ENCODE measurements at regions of chr1 and their contacts with region 1.

Region 1: DNA sequence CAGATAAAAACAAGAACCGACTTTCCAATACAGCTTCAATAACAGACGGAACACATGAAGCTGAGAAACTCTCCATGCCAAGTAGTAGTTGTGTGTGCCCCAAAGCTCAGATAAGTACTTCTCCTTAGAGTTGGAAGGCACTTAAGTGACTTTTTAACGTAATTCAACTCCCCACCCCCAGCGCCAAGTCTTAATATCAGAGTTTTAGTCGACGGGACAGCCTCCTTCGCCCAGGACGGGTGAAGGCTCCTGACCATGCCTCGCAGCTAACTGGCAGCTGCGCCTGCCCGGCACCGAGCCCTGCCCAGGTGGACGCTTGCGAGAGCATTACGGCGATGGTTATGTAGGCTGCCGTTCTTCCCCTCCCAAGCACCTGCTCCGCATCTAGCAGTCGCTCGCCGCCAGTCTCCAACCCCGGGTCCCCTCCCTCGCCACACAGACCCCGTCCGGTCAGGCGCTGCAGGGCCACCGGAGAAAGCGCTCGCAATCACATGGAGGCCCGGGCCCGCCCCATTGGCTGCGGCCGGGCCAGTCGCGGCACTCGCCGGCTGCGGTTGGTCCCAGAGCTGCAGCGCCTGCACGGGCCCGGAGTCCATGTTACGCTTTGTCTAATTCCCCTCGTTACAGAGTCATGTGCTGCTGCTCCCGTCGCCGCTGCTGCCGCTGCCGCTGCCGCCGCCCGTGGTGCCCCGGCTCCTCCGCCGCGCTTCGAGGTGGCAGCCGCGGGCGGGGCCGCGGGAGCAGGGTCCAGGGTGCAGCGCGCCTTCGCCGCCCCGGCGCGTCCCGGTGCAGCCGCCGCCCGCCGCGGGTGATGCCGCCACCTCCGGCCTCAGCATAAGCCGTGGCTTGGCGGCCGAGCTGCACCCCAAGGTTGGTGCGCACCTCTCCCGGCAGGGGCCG is at the start of gene LRRC8D:
- DNase-seq: peak; percentile 67
- ATAC-seq: peak; percentile 66
- H3K4me3 Mint-ChIP-seq: peak within 1 kb of the TSS; percentile 95
- H3K27ac Mint-ChIP-seq: peak within 1 kb of the TSS; percentile 96
- H3K4me1 Mint-ChIP-seq: peaks cover 48% of the 10 kb centered on the region
- H3K27me3 Mint-ChIP-seq: no peaks in the 10 kb centered on the region
- CTCF ChIP-seq: no peak
- total RNA-seq, gene LRRC8D: 31.3 and 36.0 TPM in 2 replicates

Region 2: GRCh38 chr1:89454845-89455521 is 365.7 kb before region 1 on chr1:
- CTCF ChIA-PET with region 1: no interaction called
- POLR2A ChIA-PET with region 1: no interaction called
- intact Hi-C with region 1: no loop called
- DNase-seq: no peak
- ATAC-seq: peak; percentile 79
- H3K4me3 Mint-ChIP-seq: no peak overlapping the region
- H3K27ac Mint-ChIP-seq: no peak overlapping the region
- H3K4me1 Mint-ChIP-seq: no peaks in the 10 kb centered on the region
- H3K27me3 Mint-ChIP-seq: peaks cover 2% of the 10 kb centered on the region
- CTCF ChIP-seq: peak; percentile 41

Region 3: DNA sequence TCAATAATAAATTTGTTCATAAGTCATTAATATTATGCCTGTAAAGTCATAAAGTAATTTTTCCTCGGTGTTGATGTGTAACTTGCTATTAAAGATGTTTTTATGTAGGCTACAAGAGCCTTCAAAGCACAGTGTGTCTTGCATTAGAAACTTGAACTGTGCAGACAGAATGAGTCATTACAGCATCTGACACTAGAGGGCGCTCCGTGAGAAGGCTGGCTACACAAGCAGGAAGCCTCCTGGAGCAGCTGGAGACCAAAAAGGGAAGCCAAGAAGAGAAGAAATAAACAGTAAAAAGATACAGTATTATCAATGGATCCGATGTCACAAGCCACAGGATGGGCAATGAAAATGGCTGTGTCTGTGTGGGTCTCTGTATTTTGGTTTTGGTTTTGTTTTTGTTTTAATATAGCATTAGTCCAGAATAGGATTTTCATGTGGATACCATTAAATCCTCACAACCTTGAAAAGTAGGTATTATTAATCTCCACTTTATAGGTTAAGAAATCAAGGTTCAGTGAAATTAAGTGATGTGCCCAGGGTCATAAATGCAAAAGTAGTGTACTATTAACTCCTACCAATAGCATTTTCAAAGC is 15.9 kb before region 1 on chr1:
- CTCF ChIA-PET with region 1: interaction called, 9 read pairs
- POLR2A ChIA-PET with region 1: interaction called, 4 read pairs
- intact Hi-C with region 1: loop called (anchors 1 kb)
- DNase-seq: peak; percentile 59
- ATAC-seq: peak; percentile 94
- H3K4me3 Mint-ChIP-seq: no peak overlapping the region
- H3K27ac Mint-ChIP-seq: no peak overlapping the region
- H3K4me1 Mint-ChIP-seq: no peaks in the 10 kb centered on the region
- H3K27me3 Mint-ChIP-seq: no peaks in the 10 kb centered on the region
- CTCF ChIP-seq: peak; percentile 92

Region 4: GRCh38 chr1:89843281-89844121 is 22.8 kb after region 1 on chr1:
- CTCF ChIA-PET with region 1: interaction called, 14 read pairs
- POLR2A ChIA-PET with region 1: interaction called, 81 read pairs
- intact Hi-C with region 1: loop called (anchors 1 kb)
- DNase-seq: peak; percentile 76
- ATAC-seq: peak; percentile 91
- H3K4me3 Mint-ChIP-seq: peak overlapping the region; percentile 94
- H3K27ac Mint-ChIP-seq: peak overlapping the region; percentile 90
- H3K4me1 Mint-ChIP-seq: peaks cover 53% of the 10 kb centered on the region
- H3K27me3 Mint-ChIP-seq: no peaks in the 10 kb centered on the region
- CTCF ChIP-seq: peak; percentile 45

Region 5: GRCh38 chr1:89866568-89866967 is 45.9 kb after region 1 on chr1:
- CTCF ChIA-PET with region 1: no interaction called
- POLR2A ChIA-PET with region 1: no interaction called
- intact Hi-C with region 1: no loop called
- DNase-seq: no peak
- ATAC-seq: no peak
- H3K4me3 Mint-ChIP-seq: no peak overlapping the region
- H3K27ac Mint-ChIP-seq: no peak overlapping the region
- H3K4me1 Mint-ChIP-seq: peaks cover 35% of the 10 kb centered on the region
- H3K27me3 Mint-ChIP-seq: no peaks in the 10 kb centered on the region
- CTCF ChIP-seq: no peak

Region 6: DNA sequence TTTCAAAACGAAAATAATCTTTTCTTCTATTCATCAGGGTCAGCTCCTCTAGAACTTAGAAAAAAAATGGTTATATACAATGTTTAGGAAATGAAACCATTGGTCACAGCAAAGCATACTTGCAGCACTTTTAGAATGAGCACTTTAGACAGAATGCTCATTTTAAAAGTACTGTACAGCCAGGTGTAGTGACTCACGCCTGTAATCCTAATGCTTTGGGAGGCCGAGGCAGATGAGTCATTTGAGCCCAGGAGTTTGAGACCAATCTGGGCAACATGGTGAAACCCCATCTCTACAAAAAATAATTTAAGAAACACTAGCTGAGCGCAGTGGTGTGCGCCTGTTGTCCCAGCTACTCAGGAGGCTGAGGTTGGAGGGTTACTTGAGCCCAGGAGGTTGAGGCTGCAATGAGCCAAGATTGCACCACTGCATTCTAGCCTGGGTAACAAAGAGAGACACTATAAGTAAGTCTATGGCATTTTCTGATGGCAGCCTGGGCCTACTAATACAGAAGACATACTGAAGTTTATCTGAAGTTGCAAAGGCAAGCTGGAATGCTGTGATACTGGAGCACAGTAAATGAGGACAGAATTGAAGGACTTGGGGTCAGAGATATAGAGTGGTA is 125.3 kb after region 1 on chr1:
- CTCF ChIA-PET with region 1: no interaction called
- POLR2A ChIA-PET with region 1: interaction called, 15 read pairs
- intact Hi-C with region 1: no loop called
- DNase-seq: no peak
- ATAC-seq: no peak
- H3K4me3 Mint-ChIP-seq: no peak overlapping the region
- H3K27ac Mint-ChIP-seq: no peak overlapping the region
- H3K4me1 Mint-ChIP-seq: peaks cover 3% of the 10 kb centered on the region
- H3K27me3 Mint-ChIP-seq: no peaks in the 10 kb centered on the region
- CTCF ChIP-seq: no peak